ENCODE measurements at regions of chr1 and their contacts with region 1.

Region 1: DNA sequence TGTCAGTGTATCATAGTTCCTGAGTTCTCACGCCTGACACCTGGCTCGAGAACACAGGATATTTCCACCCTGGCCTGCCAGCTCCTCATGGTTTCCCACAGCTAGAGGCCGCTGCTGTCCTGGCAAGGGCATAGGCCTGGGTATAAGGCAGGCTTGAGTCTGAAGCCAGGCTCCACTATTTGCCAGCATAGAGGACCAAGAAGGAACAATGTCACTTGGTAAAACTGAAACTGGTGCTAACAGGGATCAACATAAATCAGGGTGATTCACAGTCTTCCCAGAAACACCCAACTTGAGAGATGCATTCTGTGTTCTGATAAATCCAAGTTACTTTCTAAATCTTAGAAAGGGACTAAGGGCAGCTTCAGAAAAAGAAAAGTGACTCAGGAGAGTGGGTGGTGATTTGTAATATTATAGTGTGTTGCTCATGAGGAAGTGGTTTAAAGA is 6.9 kb upstream of the S100A2 start:
- DNase-seq: peak; percentile 38
- H3K4me3 Mint-ChIP-seq: no peak overlapping the region
- H3K27ac Mint-ChIP-seq: no peak overlapping the region
- H3K4me1 Mint-ChIP-seq: peaks cover 31% of the 10 kb centered on the region
- H3K27me3 Mint-ChIP-seq: peaks cover 9% of the 10 kb centered on the region

Region 2: GRCh38 chr1:153510984-153511410 is 61.6 kb before region 1 on chr1:
- intact Hi-C with region 1: loop called (anchors 1 kb)
- DNase-seq: peak; percentile 64
- H3K4me3 Mint-ChIP-seq: no peak overlapping the region
- H3K27ac Mint-ChIP-seq: peak overlapping the region; percentile 56
- H3K4me1 Mint-ChIP-seq: peaks cover 11% of the 10 kb centered on the region
- H3K27me3 Mint-ChIP-seq: no peaks in the 10 kb centered on the region

Region 3: GRCh38 chr1:153598309-153599172 is 25.9 kb after region 1 on chr1:
- intact Hi-C with region 1: loop called (anchors 1 kb)
- DNase-seq: no peak
- H3K4me3 Mint-ChIP-seq: no peak overlapping the region
- H3K27ac Mint-ChIP-seq: peak overlapping the region; percentile 23
- H3K4me1 Mint-ChIP-seq: peaks cover 21% of the 10 kb centered on the region
- H3K27me3 Mint-ChIP-seq: no peaks in the 10 kb centered on the region

Region 4: GRCh38 chr1:153617675-153618074 is 45.1 kb after region 1 on chr1:
- intact Hi-C with region 1: loop called (anchors 1 kb)
- DNase-seq: peak; percentile 70
- H3K4me3 Mint-ChIP-seq: no peak overlapping the region
- H3K27ac Mint-ChIP-seq: no peak overlapping the region
- H3K4me1 Mint-ChIP-seq: peaks cover 4% of the 10 kb centered on the region
- H3K27me3 Mint-ChIP-seq: no peaks in the 10 kb centered on the region

Region 5: DNA sequence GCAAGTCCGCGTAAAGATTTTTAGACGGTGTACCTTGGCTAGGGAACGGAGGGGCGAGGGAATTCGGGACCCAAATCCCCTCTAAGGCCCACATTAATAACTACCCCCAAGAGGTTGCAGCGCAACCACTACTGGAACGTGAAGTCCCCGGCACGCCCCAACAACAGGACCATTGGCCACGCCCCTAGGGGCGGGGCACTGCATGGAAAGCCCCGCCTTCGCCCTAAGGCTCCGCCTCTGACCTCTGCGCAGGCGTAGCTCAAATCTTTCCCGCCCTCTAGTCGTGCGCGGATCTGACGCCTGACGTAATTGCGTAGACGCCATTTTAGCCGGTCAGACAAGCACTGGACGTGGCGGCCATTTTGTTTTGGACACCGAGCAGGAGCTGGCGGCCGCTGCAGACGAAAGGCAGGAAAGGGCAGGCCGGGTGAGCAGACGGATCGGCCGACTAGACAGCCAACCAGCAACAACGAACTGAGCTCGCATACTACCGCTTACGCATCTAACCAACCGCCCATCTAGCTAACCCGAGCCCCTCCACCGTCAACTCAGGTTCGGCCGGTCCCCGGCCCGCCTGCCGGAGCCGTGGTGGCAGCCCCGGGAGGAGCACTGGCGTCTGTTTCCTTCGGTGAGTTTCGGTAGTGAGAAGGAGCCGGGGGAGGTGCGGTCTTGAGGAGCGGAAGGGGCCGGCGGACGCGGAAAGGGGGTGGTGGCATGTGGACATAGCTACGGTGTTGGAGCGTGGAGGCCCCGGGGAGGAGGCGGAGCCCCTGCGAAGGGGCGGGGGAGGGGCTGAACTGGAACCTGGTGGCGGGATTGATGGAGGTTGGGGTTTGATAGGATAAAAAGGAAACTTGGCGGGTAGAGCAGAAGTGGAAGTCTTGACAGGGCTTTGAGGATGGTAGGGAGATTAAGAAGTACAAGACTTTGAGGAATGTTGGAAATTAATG is 61.4 kb after region 1 on chr1 and contains the start of gene CHTOP:
- intact Hi-C with region 1: loop called (anchors 5 kb)
- DNase-seq: peak; percentile 96
- H3K4me3 Mint-ChIP-seq: peak within 1 kb of the TSS; percentile 96
- H3K27ac Mint-ChIP-seq: peak within 1 kb of the TSS; percentile 100
- H3K4me1 Mint-ChIP-seq: peaks cover 28% of the 10 kb centered on the region
- H3K27me3 Mint-ChIP-seq: no peaks in the 10 kb centered on the region
- total RNA-seq, gene CHTOP: 94.6 and 98.7 TPM in 2 replicates